Gastrocnemius medialis (tissue), 4 donors: ENCODE measurements at regions of chr11 and their contacts with region 1.

Region 1: DNA sequence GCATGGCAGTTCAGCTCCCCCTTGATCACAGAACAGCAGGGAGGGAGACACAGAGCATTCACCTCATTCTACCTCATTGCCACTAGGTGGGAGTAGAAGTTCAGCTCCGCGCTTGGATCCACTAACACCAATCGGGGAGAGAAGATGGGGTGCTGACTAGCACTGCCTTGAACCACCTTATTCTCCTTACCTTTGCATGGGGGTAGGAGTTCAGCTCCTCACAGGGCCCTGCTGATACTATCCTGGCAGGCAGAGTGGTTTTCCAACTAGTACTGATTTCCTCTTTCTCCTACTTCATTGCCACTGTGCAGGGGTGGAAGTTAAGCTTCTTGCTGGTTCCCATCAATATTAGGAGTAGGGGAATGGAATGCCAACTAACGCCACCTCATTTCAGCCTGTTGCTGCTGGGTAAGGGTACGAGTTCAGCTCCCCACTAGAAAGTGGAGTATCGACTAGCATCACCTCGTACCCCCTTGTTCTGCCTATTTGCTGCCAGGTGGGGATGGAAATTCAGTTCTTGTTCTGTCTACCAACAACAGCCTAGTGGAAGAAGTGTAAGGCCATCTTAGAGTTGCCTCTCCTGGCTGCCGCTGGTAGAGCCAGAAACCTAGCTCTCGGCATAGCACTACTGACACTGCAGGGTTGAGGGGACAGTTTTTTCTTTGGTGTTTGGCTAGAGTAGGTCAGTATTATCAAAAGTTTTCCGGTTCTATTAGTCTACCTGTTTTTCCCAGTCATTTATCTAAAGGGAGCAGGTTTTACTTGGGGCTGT is 550.9 kb upstream of the CCDC90B start:
- DNase-seq: no peak
- ATAC-seq: no peak
- H3K4me3 ChIP-seq: no peak overlapping the region
- H3K27ac ChIP-seq: no peak overlapping the region
- H3K4me1 ChIP-seq: no peaks in the 10 kb centered on the region
- H3K27me3 ChIP-seq: no peaks in the 10 kb centered on the region
- CTCF ChIP-seq: no peak
- POLR2A ChIP-seq: no peak

Region 2: DNA sequence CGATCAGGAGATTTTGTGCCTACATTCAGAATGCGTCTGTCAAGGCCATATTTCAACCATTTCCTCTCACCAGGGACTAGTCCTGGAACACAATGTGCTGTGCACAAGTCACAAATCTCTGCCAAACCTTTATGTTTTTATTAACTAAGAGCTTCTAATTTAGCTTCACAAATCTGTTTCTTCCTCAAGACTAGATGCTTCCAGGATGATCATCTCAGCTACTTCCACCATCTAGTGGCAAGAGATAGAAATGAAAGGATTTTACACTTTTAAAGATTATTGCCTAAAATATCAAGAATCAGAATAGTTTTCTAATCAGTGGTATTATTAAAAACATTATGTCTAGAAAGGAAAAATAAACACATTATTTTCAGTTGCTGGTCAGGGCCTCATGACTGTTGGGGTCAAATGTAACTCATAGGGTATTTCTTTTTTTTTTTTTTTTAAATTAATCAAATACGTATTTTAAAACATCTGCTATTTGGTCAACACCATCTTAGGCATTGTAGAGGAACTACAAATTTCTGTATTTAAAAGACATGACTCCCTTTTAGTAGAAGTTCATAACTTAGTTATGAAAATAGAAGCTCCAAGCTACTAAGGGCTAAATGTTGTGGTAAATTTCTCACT is 687.5 kb after region 1 on chr11:
- in situ Hi-C with region 1: loop called in 1 of 4 experiments (anchors 25 kb)
- intact Hi-C with region 1: loop called (anchors 5 kb)
- DNase-seq: no peak
- ATAC-seq: no peak
- H3K4me3 ChIP-seq: no peak overlapping the region
- H3K27ac ChIP-seq: no peak overlapping the region
- H3K4me1 ChIP-seq: no peaks in the 10 kb centered on the region
- H3K27me3 ChIP-seq: no peaks in the 10 kb centered on the region
- CTCF ChIP-seq: peak in 1 of 5 experiments; percentile 15
- POLR2A ChIP-seq: no peak